Panc1 (cell line): ENCODE measurements at regions of chr11 and their contacts with region 1.

Region 1: DNA sequence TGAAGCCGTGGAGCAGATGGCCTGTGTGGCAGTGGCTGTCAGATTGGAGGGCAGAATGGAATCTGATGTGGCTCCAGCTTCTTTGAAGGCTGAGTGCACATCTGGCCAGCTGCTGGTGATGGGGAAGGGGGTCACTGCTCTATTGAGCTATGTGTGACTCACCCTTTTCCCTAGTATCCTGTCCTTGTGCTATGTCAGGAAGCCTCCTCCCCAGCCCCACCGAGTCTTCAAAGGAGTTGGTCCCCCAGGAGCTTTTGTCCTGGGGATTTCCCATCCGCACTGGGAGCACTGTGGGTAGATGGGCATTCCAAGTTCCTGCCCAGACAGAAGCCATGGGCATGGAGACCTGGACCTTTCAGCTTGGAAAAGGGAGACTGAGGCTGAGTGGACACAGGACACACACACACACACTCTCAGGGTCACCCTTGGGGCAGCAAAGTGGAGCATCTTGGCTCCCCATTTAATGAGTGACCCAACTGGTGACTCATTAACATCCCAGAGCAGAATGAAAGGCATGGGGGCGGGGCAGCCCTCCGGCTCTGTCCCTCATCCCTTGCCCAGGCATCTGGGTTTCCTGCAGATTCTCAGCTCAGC is 3.3 kb downstream of the SERPINH1 start:
- DNase-seq: no peak
- ATAC-seq: no peak
- H3K4me3 ChIP-seq: no peak overlapping the region
- H3K27ac ChIP-seq: no peak overlapping the region
- H3K4me1 ChIP-seq: peaks cover 32% of the 10 kb centered on the region
- H3K27me3 ChIP-seq: no peaks in the 10 kb centered on the region
- CTCF ChIP-seq: no peak

Region 2: DNA sequence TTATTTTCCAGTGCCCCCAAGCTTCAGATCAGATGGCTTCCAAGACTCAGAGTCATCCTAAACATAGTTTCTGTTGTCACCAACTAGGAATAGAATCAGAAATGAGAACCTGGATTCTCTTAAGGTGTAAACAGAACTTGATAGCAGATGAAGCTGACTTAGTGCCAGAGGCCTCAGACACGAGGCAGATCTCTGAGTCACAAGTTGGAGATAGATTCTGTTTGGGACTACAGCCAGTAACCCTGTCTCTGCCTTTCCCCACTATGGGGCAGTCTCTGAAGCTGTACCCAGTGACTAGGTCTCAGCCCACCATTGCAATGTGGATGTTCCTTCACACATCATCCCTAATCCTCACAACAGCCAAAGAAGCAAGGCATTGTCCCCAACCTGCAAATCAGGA is 551.2 kb before region 1 on chr11:
- CTCF ChIA-PET with region 1: no interaction called
- POLR2A ChIA-PET with region 1: no interaction called
- in situ Hi-C with region 1: no loop called
- intact Hi-C with region 1: no loop called
- DNase-seq: no peak
- ATAC-seq: peak; percentile 48; the same call in 1 of the 2 replicates
- H3K4me3 ChIP-seq: no peak overlapping the region
- H3K27ac ChIP-seq: no peak overlapping the region
- H3K4me1 ChIP-seq: no peaks in the 10 kb centered on the region
- H3K27me3 ChIP-seq: no peaks in the 10 kb centered on the region
- CTCF ChIP-seq: no peak

Region 3: GRCh38 chr11:76872959-76873827 is 1307.9 kb after region 1 on chr11:
- CTCF ChIA-PET with region 1: no interaction called
- POLR2A ChIA-PET with region 1: interaction called, 12 read pairs
- in situ Hi-C with region 1: no loop called
- intact Hi-C with region 1: no loop called
- DNase-seq: no peak
- ATAC-seq: no peak
- H3K4me3 ChIP-seq: no peak overlapping the region
- H3K27ac ChIP-seq: no peak overlapping the region
- H3K4me1 ChIP-seq: no peaks in the 10 kb centered on the region
- H3K27me3 ChIP-seq: no peaks in the 10 kb centered on the region
- CTCF ChIP-seq: no peak